ENCODE measurements at regions of chr1 and their contacts with region 1.

Region 1: DNA sequence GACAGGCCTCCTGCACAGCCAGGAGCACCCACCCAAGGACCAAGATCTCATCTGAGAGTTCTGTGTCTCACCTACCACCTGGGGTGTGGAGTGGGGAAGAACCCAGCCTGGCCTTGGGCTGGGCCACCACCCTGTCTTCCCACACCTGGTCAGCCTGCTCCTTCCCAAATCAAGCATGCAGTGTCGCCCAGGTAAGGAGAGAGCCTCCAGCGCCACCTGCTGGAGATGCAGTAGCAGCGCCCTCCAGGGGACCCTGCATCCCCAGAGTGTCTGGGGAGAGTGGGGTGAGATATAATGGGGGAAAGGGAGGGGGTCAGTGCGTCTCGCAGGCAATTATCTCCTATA is 32.3 kb downstream of the KIAA2013 start:
- DNase-seq: peak; percentile 60

Region 2: GRCh38 chr1:11838349-11839272 is 55.3 kb before region 1 on chr1:
- in situ Hi-C with region 1: loop called (anchors 10 kb)
- DNase-seq: peak; percentile 71